GM12878 (cell line): ENCODE measurements at regions of chr12 and their contacts with region 1.

Region 1: DNA sequence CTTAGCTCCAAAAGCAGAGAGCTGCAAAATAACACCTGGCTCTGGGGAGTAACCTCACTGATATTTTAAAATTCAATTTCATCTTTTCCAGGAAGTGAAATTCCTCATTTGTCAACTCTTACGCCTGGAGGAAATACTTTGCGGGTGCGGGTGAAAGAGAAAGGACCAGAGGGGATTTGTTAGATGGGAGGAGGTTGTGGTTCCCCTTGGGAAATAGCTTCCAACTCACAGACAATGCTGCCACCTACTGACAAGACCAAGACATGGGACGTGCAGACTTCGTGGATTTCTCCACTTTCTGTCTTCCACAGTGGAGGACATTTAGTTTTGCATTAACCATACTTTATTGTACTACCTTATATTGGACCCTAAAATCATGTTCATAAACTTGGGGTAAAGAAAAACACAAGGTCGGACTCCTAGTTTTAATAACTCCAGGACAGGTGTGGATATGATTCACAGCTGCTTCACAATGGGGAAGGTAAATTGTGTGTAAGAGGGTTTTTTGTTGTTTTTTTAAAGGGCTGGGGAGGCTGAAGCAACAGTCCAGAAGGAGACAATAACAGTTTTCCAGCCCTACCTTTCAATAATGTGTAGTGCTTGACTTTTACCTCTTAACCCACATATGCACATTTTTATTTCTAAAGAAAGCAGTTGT is 10.8 kb downstream of the FBXL14 start:
- DNase-seq: peak; percentile 77
- ATAC-seq: peak; percentile 81
- H3K4me3 ChIP-seq: no peak overlapping the region
- H3K27ac ChIP-seq: no peak overlapping the region
- H3K4me1 ChIP-seq: no peaks in the 10 kb centered on the region
- H3K27me3 ChIP-seq: no peaks in the 10 kb centered on the region
- CTCF ChIP-seq: peak; percentile 81 to 97 (median 86); a peak in 5 of 6 replicates
- EP300 ChIP-seq: peak in 1 of 2 experiments; percentile 48; a peak in 1 of 4 replicates
- POLR2A ChIP-seq: no peak
- RAD21 ChIP-seq: peak; percentile 98

Region 2: DNA sequence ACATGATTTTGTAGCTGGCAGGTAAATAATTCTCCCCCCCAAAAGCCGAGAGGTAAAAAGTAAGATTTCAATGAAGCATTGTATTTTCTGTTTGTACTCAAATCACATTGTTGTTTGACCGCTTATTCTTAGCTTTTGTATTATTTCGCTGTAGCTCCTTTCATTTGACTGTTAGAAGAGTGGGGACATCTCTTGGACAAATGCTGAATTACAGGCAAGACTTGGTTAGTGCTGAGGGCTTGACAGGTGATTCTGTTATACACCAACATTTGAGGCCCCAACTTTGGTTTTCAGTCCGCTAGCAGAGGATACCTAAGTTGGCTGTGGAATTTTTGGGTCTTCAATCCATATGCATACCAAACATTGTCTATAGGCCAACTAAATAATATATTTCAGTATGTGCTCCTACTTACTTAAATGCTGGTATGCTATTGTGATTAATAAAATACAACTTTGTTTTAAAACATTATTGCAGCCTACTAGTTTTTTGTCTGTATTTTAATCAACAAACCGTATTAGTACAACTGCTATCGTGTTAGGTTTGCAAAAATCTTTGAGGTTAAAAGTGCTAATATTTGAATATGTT is 490.3 kb before region 1 on chr12:
- CTCF ChIA-PET with region 1: interaction called, 10 read pairs
- POLR2A ChIA-PET with region 1: no interaction called
- RAD21 ChIA-PET with region 1: interaction called, 6 read pairs
- SMC1A ChIA-PET with region 1: interaction called, 6 read pairs
- in situ Hi-C with region 1: no loop called
- intact Hi-C with region 1: no loop called
- DNase-seq: no peak
- ATAC-seq: peak; percentile 77
- H3K4me3 ChIP-seq: no peak overlapping the region
- H3K27ac ChIP-seq: no peak overlapping the region
- H3K4me1 ChIP-seq: peaks cover 18% of the 10 kb centered on the region
- H3K27me3 ChIP-seq: no peaks in the 10 kb centered on the region
- CTCF ChIP-seq: peak; percentile 60 to 85 (median 81)
- EP300 ChIP-seq: no peak
- POLR2A ChIP-seq: no peak
- RAD21 ChIP-seq: peak; percentile 93

Region 3: DNA sequence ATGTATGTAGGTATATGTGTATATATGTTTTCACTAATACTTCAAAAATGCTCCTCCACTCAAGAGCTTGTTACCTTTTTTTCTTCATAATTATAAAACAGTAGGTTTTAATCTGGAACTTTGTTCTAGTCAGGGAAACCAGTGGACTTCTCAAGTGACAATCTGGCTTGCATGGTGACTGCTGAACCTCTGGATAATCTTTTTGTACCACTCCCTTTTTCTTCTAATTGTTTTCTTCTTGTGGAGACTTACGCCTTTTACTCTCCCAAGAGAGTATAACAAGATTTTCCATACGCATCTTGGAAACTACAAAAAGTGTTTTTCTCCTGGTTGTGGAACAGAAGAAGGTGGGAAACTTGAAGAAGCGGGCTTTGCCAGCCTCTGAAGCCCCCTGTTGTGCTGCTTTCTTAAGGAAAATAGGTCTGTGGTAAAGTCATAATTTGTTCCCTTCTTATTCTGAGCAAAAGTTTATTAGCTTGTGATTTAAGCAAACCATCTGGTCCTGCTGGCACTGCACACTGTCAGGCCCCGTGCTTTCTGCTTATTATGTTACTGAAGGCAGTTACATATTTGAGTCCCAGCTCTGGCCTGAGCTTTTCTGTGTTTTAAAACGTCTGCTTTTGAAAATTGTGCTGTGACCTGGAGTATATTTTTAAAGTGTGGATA is 300.7 kb before region 1 on chr12:
- CTCF ChIA-PET with region 1: interaction called, 10 read pairs
- POLR2A ChIA-PET with region 1: no interaction called
- RAD21 ChIA-PET with region 1: interaction called, 5 read pairs
- SMC1A ChIA-PET with region 1: interaction called, 13 read pairs
- in situ Hi-C with region 1: no loop called
- intact Hi-C with region 1: loop called (anchors 5 kb)
- DNase-seq: no peak
- ATAC-seq: no peak
- H3K4me3 ChIP-seq: no peak overlapping the region
- H3K27ac ChIP-seq: no peak overlapping the region
- H3K4me1 ChIP-seq: no peaks in the 10 kb centered on the region
- H3K27me3 ChIP-seq: no peaks in the 10 kb centered on the region
- CTCF ChIP-seq: no peak
- EP300 ChIP-seq: no peak
- POLR2A ChIP-seq: no peak
- RAD21 ChIP-seq: no peak

Region 4: DNA sequence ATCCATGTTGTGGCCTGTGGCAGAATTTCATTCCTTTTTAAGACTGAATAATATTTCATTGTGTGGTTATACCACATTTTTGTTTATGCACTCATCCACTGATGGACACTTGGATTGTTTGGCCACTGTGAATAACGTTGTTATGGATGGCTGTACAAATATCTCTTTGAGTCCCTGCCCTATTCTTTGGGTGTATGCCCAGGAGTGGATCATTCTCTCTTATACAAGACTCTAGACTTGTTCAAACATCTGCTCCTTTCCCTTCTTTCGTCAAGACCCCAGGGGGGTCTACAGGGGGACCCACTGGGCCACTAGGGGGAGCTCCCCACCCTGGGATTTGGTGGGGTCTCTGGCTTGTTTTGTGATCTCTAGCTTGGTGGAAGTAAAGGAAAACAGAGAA is 66.5 kb before region 1 on chr12:
- CTCF ChIA-PET with region 1: interaction called, 193 read pairs
- POLR2A ChIA-PET with region 1: interaction called, 5 read pairs
- RAD21 ChIA-PET with region 1: interaction called, 61 read pairs
- SMC1A ChIA-PET with region 1: interaction called, 88 read pairs
- in situ Hi-C with region 1: no loop called
- intact Hi-C with region 1: loop called (anchors 1 kb)
- DNase-seq: no peak
- ATAC-seq: peak; percentile 83
- H3K4me3 ChIP-seq: no peak overlapping the region
- H3K27ac ChIP-seq: no peak overlapping the region
- H3K4me1 ChIP-seq: no peaks in the 10 kb centered on the region
- H3K27me3 ChIP-seq: no peaks in the 10 kb centered on the region
- CTCF ChIP-seq: peak; percentile 50 to 78 (median 71)
- EP300 ChIP-seq: no peak
- POLR2A ChIP-seq: no peak
- RAD21 ChIP-seq: peak; percentile 69

Region 5: GRCh38 chr12:1553987-1554982 is 29.3 kb before region 1 on chr12:
- CTCF ChIA-PET with region 1: interaction called, 6 read pairs
- POLR2A ChIA-PET with region 1: interaction called, 3 read pairs
- RAD21 ChIA-PET with region 1: interaction called, 20 read pairs
- SMC1A ChIA-PET with region 1: interaction called, 13 read pairs
- in situ Hi-C with region 1: no loop called
- intact Hi-C with region 1: no loop called
- DNase-seq: peak; percentile 94
- ATAC-seq: peak; percentile 96
- H3K4me3 ChIP-seq: peak overlapping the region; percentile 24; the same call in 1 of the 2 replicates
- H3K27ac ChIP-seq: peak overlapping the region; percentile 82
- H3K4me1 ChIP-seq: peaks cover 20% of the 10 kb centered on the region
- H3K27me3 ChIP-seq: no peaks in the 10 kb centered on the region
- CTCF ChIP-seq: peak in 1 of 3 experiments; percentile 6; a peak in 1 of 6 replicates
- EP300 ChIP-seq: peak; percentile 94 to 96
- POLR2A ChIP-seq: peak; percentile 45; the same call in 1 of the 2 replicates
- RAD21 ChIP-seq: peak; percentile 25

Region 6: GRCh38 chr12:1594261-1595025 is 10.9 kb after region 1 on chr12 and contains the start of gene FBXL14:
- CTCF ChIA-PET with region 1: interaction called, 48 read pairs
- POLR2A ChIA-PET with region 1: interaction called, 5 read pairs
- RAD21 ChIA-PET with region 1: interaction called, 14 read pairs
- SMC1A ChIA-PET with region 1: interaction called, 46 read pairs
- in situ Hi-C with region 1: no loop called
- intact Hi-C with region 1: no loop called
- DNase-seq: no peak
- ATAC-seq: peak; percentile 66
- H3K4me3 ChIP-seq: peak within 1 kb of the TSS; percentile 97
- H3K27ac ChIP-seq: peak within 1 kb of the TSS; percentile 34
- H3K4me1 ChIP-seq: peaks cover 11% of the 10 kb centered on the region
- H3K27me3 ChIP-seq: no peaks in the 10 kb centered on the region
- CTCF ChIP-seq: no peak
- EP300 ChIP-seq: no peak
- POLR2A ChIP-seq: peak; percentile 55
- RAD21 ChIP-seq: no peak
- polyA plus RNA-seq, gene FBXL14: 0.44 to 0.64 TPM